Calu3 (cell line): ENCODE measurements at regions of chr13 and their contacts with region 1.

Region 1: DNA sequence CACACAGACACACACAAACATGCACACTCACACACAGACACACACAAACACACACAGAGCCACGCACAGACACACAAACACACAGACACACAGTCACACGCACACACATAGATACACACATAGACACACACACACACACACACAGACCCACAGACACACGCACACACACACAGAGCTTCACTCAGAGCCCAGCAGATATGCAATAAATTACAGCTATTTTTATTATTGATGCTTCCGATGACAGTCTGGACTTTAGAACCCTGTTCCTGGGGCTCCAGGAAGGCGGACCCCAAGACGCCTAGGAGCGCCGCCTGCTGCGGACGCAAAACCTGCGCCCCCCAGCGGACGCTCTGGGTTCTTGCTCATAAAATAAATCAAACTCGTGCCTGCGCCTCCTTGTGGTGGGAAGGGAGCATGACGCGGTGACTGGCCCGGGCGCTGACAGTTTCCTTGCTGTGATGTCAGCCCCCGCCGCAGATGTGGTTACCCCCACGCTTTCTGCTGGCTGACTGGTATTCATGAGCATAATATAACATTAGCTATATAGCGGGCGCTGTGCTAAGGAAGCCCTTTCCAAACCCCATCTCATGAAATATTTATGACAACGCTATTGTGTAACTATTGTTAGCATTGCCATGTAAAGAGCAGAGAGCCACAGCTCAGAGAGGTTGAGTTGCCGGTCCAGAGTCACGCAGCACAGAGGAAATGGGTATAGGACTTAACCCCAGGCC is 64.4 kb upstream of the TM9SF2 start:
- DNase-seq: peak; percentile 59
- H3K4me3 Mint-ChIP-seq: peak overlapping the region; percentile 55
- H3K27ac Mint-ChIP-seq: no peak overlapping the region
- H3K4me1 Mint-ChIP-seq: peaks cover 10% of the 10 kb centered on the region
- H3K27me3 Mint-ChIP-seq: peaks cover 12% of the 10 kb centered on the region
- CTCF ChIP-seq: peak; percentile 84

Region 2: GRCh38 chr13:99176309-99177276 is 260.3 kb before region 1 on chr13:
- CTCF ChIA-PET with region 1: no interaction called
- intact Hi-C with region 1: loop called (anchors 2 kb)
- DNase-seq: peak; percentile 66
- H3K4me3 Mint-ChIP-seq: no peak overlapping the region
- H3K27ac Mint-ChIP-seq: no peak overlapping the region
- H3K4me1 Mint-ChIP-seq: no peaks in the 10 kb centered on the region
- H3K27me3 Mint-ChIP-seq: no peaks in the 10 kb centered on the region
- CTCF ChIP-seq: peak; percentile 45

Region 3: DNA sequence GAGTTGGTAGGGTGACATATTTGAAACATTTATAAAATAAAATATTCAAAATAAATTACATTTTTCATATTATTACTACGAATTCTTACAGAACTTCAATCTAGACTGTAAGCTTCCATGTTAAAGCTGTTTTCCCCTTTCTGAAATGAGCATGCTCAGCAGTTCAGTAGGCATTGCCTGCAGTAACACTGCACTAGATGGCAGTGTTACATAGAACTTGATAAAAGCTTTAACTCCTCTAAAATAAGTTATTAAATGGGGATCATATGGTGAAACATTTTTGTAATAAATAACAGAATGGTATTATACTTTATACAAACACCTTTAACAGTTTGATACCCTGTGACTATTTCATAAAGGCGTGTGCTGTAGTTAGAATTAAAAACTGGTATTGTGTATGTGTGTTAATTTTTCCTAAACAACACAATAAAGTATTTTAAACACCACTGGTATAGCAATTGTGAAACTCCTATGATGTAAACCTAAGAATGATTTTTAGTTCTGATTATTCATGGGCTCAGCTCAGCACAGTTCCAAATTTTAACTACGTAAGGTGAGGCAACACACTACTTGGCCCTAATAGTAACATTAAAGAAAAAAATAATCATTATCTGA is 167.1 kb before region 1 on chr13:
- CTCF ChIA-PET with region 1: interaction called, 4 read pairs
- intact Hi-C with region 1: loop called (anchors 5 kb)
- DNase-seq: no peak
- H3K4me3 Mint-ChIP-seq: no peak overlapping the region
- H3K27ac Mint-ChIP-seq: no peak overlapping the region
- H3K4me1 Mint-ChIP-seq: no peaks in the 10 kb centered on the region
- H3K27me3 Mint-ChIP-seq: no peaks in the 10 kb centered on the region
- CTCF ChIP-seq: no peak

Region 4: GRCh38 chr13:99307648-99308339 is 129.1 kb before region 1 on chr13:
- CTCF ChIA-PET with region 1: no interaction called
- intact Hi-C with region 1: no loop called
- DNase-seq: no peak
- H3K4me3 Mint-ChIP-seq: no peak overlapping the region
- H3K27ac Mint-ChIP-seq: no peak overlapping the region
- H3K4me1 Mint-ChIP-seq: no peaks in the 10 kb centered on the region
- H3K27me3 Mint-ChIP-seq: no peaks in the 10 kb centered on the region
- CTCF ChIP-seq: no peak

Region 5: DNA sequence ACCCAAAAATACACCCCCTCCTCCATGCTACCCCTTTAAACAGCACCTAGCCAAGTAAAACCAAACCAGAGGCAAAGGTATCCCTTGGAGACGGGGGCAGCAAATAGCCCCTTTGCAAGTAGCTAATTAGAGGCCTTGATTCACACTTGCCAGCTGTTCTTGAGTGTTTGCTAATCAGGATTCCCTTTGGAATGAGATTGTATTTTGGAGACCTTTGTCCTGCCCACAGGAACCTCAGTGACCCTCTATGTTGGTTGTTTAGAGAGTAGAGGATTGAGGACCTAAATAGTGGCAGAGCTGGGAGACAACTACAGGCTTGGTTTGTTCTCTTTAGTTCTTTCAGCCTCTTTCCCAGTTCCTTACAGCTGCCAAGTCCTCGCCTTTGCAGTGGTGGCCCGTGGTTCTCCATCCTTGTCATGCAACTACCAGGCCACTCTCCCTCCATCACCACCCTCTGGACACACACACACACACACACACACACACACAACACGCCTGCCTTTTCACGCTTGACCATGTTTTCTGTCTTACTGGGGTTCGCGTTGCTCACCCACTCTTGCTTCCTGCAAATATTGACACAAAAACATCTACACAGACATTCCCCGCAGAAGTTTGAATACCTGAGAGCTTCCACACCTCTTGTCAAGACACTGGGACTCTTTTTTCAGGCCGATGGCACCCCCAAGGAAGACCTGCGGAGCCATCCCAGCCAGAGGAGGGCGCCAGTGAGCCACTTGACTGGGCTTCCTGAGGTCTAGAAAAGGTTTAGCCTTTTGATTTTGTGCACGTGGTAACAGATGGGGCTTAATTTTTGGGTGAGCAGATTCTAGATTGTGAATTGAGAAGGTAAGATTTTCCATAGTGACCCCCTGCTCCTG is 49.7 kb before region 1 on chr13:
- CTCF ChIA-PET with region 1: no interaction called
- intact Hi-C with region 1: loop called (anchors 5 kb)
- DNase-seq: peak; percentile 16
- H3K4me3 Mint-ChIP-seq: no peak overlapping the region
- H3K27ac Mint-ChIP-seq: no peak overlapping the region
- H3K4me1 Mint-ChIP-seq: no peaks in the 10 kb centered on the region
- H3K27me3 Mint-ChIP-seq: no peaks in the 10 kb centered on the region
- CTCF ChIP-seq: peak; percentile 26

Region 6: DNA sequence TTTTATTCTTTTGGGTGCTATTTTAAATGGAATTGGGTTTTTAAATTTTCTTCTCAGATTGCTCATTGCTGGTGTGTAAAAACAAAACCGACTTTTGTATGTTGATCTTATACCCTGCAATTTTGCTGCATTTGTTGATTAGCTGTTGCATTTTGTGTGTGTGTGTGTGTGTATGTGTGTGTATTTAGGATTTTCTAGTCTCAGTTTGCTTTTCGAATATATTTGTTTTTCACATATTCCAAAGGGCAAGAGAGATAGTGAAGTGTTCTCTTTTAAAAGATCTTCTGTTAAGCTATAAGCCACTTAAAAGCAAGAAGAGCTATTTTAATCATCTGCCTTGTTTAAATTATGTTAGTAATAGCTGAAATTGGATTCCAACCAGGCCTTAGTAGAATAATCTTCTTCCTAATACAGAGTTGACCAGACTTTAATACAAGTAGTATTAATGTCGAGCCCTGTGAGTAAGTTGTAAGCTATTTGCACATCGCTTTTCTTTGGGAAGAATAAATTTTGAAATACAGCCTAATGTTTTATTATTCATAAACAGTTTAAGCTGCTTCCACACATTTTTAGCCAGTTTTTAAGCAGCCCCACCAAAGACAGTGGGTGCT is 121.8 kb after region 1 on chr13:
- CTCF ChIA-PET with region 1: no interaction called
- intact Hi-C with region 1: no loop called
- DNase-seq: no peak
- H3K4me3 Mint-ChIP-seq: no peak overlapping the region
- H3K27ac Mint-ChIP-seq: no peak overlapping the region
- H3K4me1 Mint-ChIP-seq: no peaks in the 10 kb centered on the region
- H3K27me3 Mint-ChIP-seq: no peaks in the 10 kb centered on the region
- CTCF ChIP-seq: no peak